ENCODE measurements at regions of chr18 and their contacts with region 1.

Region 1: DNA sequence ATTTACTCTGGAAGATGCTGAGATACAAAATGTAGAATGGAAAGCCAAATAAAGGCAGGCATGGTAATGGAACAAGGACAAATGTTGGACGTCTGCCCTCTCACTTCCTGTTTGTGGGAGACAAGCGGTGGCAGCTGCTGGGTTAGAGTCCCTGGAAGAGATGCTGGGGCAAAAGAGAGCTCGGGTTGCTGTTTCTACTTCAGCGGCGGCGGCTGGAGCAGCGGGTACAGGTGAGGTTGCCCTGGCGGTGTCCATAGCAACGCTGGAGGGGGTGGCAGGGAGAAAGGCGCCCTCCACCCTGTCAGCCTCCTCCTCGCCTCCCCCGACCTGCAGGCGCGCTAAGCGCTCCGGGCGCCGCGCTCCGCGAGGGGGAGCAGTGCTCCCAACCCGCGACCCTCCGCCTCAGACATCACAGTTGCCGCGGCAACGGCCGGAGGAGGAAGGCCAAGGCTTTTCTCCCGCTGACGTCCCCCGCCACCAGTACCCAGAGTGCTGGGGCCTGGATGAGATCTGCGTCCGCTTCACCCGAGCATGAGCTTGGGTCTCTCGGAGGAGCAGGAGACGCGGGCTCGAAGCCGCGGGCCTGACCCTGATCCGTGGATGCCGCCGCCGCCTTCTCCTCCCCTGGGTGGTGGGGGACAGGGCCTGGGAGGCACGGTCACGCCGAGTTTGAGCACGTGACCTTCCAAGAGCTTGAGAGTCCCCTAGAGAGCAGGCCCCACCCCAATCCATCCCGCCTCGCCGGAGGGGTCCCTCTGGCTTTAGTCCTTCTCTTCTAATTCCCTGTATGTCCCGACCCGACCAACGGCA is 65.6 kb downstream of the NOL4 start:
- DNase-seq: no peak
- ATAC-seq: no peak
- H3K4me3 ChIP-seq: no peak overlapping the region
- H3K27ac ChIP-seq: no peak overlapping the region
- H3K4me1 ChIP-seq: no peaks in the 10 kb centered on the region
- H3K27me3 ChIP-seq: no peaks in the 10 kb centered on the region
- CTCF ChIP-seq: no peak
- EP300 ChIP-seq: no peak
- POLR2A ChIP-seq: no peak
- RAD21 ChIP-seq: no peak

Region 2: DNA sequence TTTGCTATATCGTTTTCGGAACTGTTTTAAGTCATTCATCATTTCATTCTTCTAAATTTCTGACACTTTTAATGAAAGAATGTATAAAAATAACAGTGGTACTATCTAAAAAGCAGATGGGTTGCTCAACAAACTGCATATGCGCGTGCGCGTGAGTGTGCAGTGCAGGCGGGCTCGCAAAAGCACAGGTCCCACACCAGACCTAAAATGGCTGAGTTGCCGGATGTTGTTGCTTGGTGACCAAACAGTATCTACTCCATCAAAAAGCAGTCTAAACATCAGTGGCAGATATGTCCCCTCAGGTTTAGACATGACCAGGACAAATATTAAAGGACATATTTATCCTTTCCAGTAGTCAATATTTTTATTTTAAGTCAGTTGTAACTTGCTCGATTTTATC is 60.6 kb after region 1 on chr18:
- CTCF ChIA-PET with region 1: no interaction called
- POLR2A ChIA-PET with region 1: no interaction called
- in situ Hi-C with region 1: loop called (anchors 10 kb)
- intact Hi-C with region 1: no loop called
- DNase-seq: no peak
- ATAC-seq: no peak
- H3K4me3 ChIP-seq: no peak overlapping the region
- H3K27ac ChIP-seq: no peak overlapping the region
- H3K4me1 ChIP-seq: peaks cover 0 to 6% of the 10 kb centered on the region in 2 experiments; a peak in 1 of 5 replicates
- H3K27me3 ChIP-seq: no peaks in the 10 kb centered on the region
- CTCF ChIP-seq: no peak
- EP300 ChIP-seq: no peak
- POLR2A ChIP-seq: no peak
- RAD21 ChIP-seq: no peak

Measured in K562 (cell line).